Activated CD4-positive, alpha-beta memory T cell treated with anti-CD3 and anti-CD28 coated beads for 36 hours (primary cell): ENCODE measurements at regions of chr10 and their contacts with region 1.

Region 1: DNA sequence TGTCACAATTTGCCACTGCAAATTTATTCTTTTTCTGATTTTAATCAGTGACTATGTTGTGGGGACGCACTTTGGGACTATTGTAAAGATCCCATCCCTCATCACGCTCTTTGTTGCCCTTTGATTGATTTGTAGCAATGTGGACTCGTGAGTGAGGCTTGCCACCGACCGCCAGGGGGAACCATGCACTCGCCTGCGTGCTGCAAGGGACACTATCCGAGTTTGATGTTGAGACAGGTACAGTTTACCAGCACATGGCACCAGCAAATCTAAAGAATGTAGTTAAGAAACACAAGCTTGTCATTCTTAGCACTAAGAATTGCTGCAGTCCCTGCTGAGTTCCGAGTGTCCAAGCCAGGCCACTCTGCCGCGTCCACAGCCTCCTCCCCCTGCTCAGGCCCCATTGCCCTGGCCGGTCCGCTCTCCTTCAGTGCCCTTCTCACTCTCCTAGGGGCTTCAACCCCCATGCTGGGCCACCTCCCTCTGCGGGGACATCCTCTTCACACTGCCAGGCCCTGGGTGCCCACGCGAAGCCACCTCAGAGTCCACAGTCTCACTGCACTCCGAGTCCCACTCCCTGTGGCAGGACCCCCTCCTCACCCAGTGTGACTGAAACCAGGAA is 2.0 kb upstream of the SFTPA2 start:
- DNase-seq: peak; percentile 77
- H3K4me3 Mint-ChIP-seq: no peak overlapping the region
- H3K27ac Mint-ChIP-seq: no peak overlapping the region
- H3K4me1 Mint-ChIP-seq: peaks cover 4% of the 10 kb centered on the region
- H3K27me3 Mint-ChIP-seq: peaks cover 8% of the 10 kb centered on the region

Region 2: GRCh38 chr10:79608505-79609375 is 46.5 kb after region 1 on chr10:
- CTCF ChIA-PET with region 1: interaction called, 5 read pairs
- POLR2A ChIA-PET with region 1: no interaction called
- intact Hi-C with region 1: loop called (anchors 1 kb)
- DNase-seq: peak; percentile 59
- H3K4me3 Mint-ChIP-seq: no peak overlapping the region
- H3K27ac Mint-ChIP-seq: no peak overlapping the region
- H3K4me1 Mint-ChIP-seq: no peaks in the 10 kb centered on the region
- H3K27me3 Mint-ChIP-seq: peaks cover 3% of the 10 kb centered on the region

Region 3: GRCh38 chr10:79929409-79929904 is 367.2 kb after region 1 on chr10:
- CTCF ChIA-PET with region 1: interaction called, 7 read pairs
- POLR2A ChIA-PET with region 1: no interaction called
- intact Hi-C with region 1: loop called (anchors 1 kb)
- DNase-seq: peak; percentile 85
- H3K4me3 Mint-ChIP-seq: no peak overlapping the region
- H3K27ac Mint-ChIP-seq: no peak overlapping the region
- H3K4me1 Mint-ChIP-seq: peaks cover 5% of the 10 kb centered on the region
- H3K27me3 Mint-ChIP-seq: peaks cover 26% of the 10 kb centered on the region